Esophagus muscularis mucosa (tissue), 4 donors: ENCODE measurements at regions of chr5 and their contacts with region 1.

Region 1: GRCh38 chr5:139696894-139697658 is 48.9 kb downstream of the CXXC5 start:
- DNase-seq: peak; percentile 94
- H3K4me3 ChIP-seq: peak overlapping the region; percentile 56 to 60 (median 58)
- H3K27ac ChIP-seq: peak overlapping the region; percentile 87 to 91 (median 90)
- H3K4me1 ChIP-seq: peaks cover 41 to 53% (median 47%) of the 10 kb centered on the region in 4 donors
- H3K27me3 ChIP-seq: no peaks in the 10 kb centered on the region
- CTCF ChIP-seq: no peak
- EP300 ChIP-seq: no peak
- POLR2A ChIP-seq: no peak

Region 2: DNA sequence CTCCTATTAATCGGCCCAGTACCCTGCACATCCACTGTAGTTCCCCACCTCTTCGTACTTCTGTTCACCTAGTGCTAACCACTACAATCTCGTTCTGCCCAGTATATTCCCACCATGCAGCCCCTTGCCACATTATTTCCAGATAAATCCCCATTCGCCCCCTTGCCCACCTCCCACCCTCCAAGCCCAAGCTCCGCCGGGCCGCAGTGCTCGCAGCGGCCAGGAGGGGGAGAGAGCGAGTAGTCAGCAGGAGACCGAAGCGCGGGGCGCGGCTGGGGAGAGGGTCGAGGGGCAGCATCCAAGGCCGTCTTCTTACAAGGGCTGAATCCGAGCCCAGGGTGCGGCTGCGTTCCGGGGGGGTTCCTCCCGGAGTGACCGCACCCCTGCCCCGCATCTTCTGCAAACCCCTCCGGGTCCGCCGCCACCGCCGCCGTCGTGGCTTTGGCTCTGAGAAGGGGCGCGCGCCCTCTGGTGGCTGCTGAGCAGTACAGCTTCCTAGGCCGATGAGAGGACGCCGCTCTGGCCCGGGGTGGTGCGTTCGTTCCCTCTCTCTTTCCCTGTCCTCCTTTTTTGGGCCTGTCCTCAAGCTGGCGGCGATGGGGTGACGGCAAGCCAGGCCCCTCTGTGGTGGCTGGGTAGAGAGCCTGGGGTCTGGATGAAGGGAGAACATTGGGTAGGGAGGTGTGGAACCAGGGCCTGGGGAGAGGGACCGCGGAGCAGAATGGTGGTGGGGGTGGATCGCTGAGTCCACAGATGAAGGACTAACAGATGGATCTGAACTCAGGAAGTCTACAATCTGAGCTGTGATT is 68.5 kb after region 1 on chr5:
- intact Hi-C with region 1: loop called (anchors 5 kb)
- DNase-seq: no peak
- H3K4me3 ChIP-seq: peak overlapping the region; percentile 54 to 79 (median 57)
- H3K27ac ChIP-seq: peak overlapping the region in 1 of 4 donors; percentile 48
- H3K4me1 ChIP-seq: peaks cover 13 to 31% (median 22%) of the 10 kb centered on the region in 4 donors
- H3K27me3 ChIP-seq: peaks cover 0 to 30% (median 14%) of the 10 kb centered on the region in 4 donors
- CTCF ChIP-seq: peak; percentile 85 to 98 (median 96)
- EP300 ChIP-seq: no peak
- POLR2A ChIP-seq: no peak